AG04449 (cell line): ENCODE measurements at regions of chr5 and their contacts with region 1.

Region 1: DNA sequence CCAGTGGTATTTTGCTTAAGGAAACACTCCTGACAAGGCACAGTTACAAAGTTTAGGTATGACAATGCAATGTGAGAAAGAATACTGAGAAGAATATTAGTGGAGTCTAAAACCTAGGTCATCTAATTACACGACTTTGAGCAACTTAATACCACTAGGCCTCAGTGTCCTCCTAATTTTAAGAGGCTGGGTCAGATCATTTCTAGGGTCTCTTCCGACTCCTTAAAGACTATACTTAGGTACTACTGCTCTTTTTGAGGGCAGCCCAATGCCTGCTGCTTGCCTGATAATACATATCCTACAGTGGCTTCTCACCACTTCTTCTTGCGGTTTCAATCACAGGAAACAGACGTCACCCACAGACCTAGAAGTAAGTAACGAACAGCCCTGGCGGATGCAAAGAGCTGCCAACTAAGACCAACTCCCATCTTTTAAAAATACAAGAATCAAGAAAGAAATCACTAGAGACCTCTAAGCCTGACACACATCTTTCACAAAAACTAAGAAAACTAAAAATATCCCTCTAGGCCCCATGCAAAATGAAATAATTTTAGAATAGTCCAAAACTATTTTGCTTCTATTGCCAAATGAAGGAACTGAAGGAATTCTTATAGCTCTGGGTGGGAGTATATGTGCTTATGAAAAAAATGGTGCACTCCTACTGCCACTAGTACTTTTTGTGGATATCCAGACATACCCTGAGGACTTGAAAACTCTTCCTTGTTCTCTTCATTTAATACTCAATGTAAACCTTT is 13.1 kb downstream of the DIAPH1 start:
- DNase-seq: no peak
- H3K4me3 ChIP-seq: no peak overlapping the region
- CTCF ChIP-seq: no peak

Region 2: DNA sequence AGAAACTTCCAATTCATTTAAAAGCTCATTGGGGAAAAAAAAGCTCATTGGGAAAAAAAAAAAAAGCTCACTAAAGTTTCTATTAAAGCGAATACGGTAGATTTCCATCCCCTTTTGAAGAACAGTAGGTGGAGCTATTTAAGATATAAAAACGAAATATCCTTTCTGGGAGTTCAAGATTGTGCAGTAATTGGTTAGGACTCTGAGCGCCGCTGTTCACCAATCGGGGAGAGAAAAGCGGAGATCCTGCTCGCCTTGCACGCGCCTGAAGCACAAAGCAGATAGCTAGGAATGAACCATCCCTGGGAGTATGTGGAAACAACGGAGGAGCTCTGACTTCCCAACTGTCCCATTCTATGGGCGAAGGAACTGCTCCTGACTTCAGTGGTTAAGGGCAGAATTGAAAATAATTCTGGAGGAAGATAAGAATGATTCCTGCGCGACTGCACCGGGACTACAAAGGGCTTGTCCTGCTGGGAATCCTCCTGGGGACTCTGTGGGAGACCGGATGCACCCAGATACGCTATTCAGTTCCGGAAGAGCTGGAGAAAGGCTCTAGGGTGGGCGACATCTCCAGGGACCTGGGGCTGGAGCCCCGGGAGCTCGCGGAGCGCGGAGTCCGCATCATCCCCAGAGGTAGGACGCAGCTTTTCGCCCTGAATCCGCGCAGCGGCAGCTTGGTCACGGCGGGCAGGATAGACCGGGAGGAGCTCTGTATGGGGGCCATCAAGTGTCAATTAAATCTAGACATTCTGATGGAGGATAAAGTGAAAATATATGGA is 175.2 kb before region 1 on chr5 and contains the start of gene PCDHGA12:
- CTCF ChIA-PET with region 1: no interaction called
- POLR2A ChIA-PET with region 1: no interaction called
- DNase-seq: peak; percentile 52
- H3K4me3 ChIP-seq: peak within 1 kb of the TSS; percentile 49
- CTCF ChIP-seq: peak; percentile 38

Region 3: GRCh38 chr5:141590127-141590526 is 15.6 kb before region 1 on chr5:
- CTCF ChIA-PET with region 1: interaction called, 119 read pairs
- POLR2A ChIA-PET with region 1: interaction called, 4 read pairs
- DNase-seq: no peak
- H3K4me3 ChIP-seq: no peak overlapping the region
- CTCF ChIP-seq: no peak

Region 4: DNA sequence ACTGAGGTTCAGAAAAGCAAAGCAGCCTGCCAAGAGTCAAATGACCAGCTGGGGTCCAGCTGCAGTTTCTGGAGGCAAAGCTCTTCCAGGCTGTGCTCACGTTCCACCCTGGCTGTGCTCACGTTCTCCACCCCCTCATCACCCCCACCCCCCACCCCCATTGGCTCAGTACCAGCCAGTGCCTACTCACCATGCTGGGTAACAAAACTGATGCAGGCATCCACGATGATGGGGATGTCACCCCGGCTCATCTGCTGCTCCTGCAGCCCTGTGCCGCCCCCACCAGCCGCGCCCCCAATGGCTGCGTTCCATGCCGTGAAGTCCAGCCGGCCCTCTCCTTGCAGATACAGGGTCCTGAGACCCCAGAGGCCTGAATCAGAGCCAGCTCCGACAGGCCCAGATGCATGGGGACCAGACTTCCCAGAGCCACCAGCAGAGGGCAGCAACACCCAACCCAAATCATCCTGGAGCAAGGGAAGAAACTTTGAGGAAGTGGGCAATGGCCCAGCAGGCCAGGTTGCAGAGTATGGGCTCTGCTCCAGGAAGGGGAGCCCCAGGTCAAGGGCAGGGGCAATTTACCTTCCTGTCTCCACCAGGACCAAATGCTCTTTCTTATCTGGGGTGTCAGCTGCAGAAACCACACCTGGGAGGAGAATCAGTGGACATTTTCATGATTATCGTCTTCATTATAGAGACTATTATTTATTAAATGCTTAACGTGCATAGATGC is 59.2 kb after region 1 on chr5:
- CTCF ChIA-PET with region 1: no interaction called
- POLR2A ChIA-PET with region 1: no interaction called
- DNase-seq: no peak
- H3K4me3 ChIP-seq: no peak overlapping the region
- CTCF ChIP-seq: peak; percentile 90

Region 5: DNA sequence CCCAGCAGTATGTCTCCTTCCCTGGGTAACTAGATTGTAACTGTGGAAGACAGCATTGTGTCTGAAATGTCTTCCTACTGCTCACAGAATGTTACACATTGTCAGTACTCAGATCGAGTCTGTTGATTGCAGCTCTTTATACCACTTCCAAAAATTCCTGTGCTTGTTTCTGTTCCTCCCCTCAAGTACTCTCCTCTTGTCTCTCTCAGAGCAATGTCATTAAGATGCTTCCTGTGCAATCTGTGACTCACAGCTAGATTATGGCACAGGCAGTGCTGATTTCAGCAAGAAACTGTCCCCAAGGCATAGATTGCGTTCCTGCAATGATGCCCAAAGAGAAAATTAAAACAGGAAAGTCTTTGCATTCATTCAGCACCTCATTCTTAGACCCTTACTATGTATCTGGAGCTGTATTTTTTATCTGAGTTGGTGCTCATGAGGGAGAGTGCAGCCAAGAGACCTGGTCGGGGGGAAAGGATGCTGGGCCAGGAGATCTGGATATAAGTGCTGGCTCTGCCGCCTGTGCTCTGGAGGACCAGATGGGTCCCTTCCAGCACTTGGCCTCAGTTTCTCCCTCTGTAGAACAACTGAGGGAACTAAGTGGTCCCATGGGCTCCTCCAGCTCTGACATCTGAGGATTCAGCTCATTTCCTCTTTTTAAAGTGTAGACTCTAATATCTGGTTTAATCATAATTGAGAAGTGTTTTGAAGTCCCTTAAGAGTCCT is 447.9 kb after region 1 on chr5:
- CTCF ChIA-PET with region 1: no interaction called
- POLR2A ChIA-PET with region 1: no interaction called
- DNase-seq: peak; percentile 44
- H3K4me3 ChIP-seq: no peak overlapping the region
- CTCF ChIP-seq: no peak